Right cardiac atrium (tissue), 5 donors: ENCODE measurements at regions of chr12 and their contacts with region 1.

Region 1: DNA sequence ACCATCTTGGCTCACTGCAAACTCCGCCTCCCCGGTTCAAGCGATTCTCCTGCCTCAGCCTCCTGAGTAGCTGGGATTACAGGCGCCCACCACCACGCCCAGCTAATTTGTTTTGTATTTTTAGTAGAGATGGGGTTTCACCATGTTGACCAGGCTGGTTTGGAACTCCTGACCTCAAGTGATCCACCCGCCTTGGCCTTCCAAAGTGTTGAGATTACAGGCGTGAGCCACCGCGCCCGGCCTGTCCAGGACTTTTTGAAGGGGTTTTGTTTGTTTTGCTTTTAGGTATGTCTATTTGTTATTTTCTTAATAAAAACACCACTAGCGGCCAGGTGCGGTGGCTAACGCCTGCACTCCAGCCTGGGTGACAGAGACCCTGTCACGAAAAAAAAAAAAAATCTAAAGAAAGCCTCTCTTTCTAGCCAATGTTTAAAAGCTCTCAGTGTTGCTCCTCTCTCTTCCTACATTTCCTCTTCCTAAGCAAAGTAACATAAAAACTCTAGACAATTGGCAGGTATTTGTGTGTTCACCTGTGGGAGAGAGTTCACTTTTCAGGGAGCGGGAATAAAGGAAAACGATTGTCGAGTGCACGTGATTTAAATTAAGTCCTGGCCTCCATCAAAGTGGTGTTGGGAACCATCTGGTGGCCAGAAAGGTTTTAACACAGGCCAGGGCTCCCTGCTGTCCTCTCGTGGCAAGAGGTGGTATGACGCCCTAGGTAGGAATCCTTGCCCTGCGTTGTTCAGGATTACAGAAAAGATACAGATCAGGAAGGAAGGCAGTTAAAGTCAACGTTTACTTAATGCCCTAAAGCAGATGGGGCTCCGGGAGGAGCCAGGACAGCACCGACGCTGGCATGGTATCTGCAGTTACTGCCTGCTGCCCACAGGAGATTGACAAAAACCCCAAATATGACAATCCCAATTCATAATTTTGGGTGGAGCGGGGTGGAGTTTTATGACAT is 36.2 kb upstream of the ATP23 start:
- DNase-seq: peak; percentile 78 to 91 (median 90)
- ATAC-seq: peak; percentile 91 to 92
- H3K4me3 ChIP-seq: peak overlapping the region; percentile 9
- H3K27ac ChIP-seq: no peak overlapping the region
- H3K4me1 ChIP-seq: no peaks in the 10 kb centered on the region
- H3K27me3 ChIP-seq: no peaks in the 10 kb centered on the region

Region 2: GRCh38 chr12:57803319-57803893 is 101.7 kb before region 1 on chr12:
- intact Hi-C with region 1: loop called in 1 of 4 experiments (anchors 2 kb)
- DNase-seq: peak; percentile 51 to 83 (median 76)
- ATAC-seq: peak; percentile 78 to 80
- H3K4me3 ChIP-seq: no peak overlapping the region
- H3K27ac ChIP-seq: no peak overlapping the region
- H3K4me1 ChIP-seq: no peaks in the 10 kb centered on the region
- H3K27me3 ChIP-seq: no peaks in the 10 kb centered on the region